ENCODE measurements at regions of chr19 and their contacts with region 1.

Region 1: DNA sequence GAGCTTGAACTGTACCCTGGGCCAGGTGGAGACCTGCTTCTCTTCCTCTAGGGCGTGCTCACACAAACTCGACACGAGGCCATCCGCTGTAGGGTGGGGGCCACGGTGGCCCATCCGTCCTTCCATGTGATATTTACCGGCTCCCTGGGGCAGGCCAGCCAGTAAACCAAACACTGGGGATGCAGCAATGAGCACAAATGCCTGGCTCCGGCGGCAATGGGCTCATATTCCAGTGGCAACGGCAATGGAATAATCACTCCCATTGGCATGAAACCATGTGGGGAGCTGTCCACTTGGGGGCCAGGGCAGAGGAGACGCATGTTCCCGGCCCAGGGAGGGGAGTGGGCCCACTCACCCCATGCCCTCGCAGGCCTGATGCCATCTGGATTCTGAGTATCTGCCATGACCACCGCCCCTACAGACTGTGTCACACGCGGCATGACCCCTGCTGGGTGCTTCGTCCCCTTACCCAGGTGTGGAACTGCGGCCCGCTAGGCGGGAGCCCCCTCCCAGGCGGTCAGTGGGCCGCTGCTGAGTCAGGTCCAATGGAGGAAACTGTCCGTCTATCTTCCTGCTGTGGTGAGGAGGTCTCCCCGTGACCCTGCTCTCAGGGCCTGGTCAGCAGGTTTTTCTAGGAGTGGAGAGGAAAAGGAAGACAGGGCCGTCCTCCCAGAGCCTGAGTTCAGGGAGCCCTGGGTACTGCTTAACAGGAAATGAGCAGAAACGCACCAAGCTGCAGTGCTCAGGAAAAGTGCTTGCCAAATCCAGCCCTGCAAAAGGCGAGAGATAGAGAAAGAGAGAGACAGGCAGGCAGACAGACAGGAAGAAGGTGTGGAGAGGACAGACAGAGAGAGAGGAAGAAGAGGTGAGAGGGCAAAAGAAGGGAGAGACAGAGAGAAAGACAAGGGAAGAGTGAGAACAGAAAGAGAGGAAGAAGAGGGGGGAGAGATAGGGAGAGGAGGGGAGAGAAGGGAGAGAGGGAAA is 10.5 kb downstream of the SH3GL1 start:
- DNase-seq: no peak
- H3K4me3 ChIP-seq: no peak overlapping the region
- H3K27ac ChIP-seq: peak overlapping the region; percentile 76
- H3K4me1 ChIP-seq: peaks cover 28% of the 10 kb centered on the region
- H3K27me3 ChIP-seq: no peaks in the 10 kb centered on the region
- CTCF ChIP-seq: no peak

Region 2: DNA sequence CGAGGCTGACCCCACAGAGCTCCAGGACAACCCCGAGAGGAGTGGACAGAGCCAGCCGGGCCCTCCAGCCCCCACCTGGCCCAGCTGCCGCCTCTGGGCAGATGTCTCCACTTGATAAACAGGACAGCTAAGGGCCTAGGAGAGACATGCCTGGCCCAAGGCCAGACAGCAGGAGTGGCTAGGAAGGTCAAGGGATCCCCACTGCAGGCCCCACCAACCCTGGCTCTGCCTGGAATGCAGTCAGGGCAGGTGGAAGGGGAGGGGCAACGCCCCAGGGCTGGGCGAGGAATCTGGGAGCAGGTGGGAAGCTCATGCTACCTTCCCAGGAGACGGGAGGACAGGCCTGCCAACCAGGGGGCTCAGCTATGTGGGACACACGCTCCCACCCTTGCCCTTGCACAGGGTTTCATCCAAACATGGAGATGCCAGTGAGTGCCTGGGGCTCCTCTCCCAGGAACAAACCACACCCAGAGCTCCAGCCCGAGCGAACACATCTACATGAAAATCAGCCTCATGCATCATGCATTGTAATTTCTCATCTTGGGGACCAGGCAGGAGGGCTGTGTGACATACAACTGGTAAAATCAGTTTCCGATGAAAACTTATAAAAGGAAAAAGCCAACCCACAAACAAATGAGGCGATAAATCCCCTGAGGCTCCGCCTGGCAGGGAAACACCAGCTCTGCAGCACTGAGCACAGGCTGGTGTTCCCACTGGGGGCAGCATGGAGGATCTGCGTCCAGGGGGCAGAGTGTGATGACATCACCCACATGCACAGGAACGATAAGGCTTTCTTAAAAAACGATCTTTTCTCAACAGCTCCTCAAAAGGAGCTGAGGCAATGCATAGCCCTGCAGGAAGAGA is 14.5 kb before region 1 on chr19:
- CTCF ChIA-PET with region 1: interaction called, 9 read pairs
- POLR2A ChIA-PET with region 1: interaction called, 10 read pairs
- intact Hi-C with region 1: no loop called
- DNase-seq: peak; percentile 95
- H3K4me3 ChIP-seq: peak overlapping the region; percentile 2
- H3K27ac ChIP-seq: peak overlapping the region; percentile 82
- H3K4me1 ChIP-seq: peaks cover 49% of the 10 kb centered on the region
- H3K27me3 ChIP-seq: no peaks in the 10 kb centered on the region
- CTCF ChIP-seq: peak; percentile 78

Measured in A673 (cell line).